ENCODE measurements at regions of chr11 and their contacts with region 1.

Region 1: DNA sequence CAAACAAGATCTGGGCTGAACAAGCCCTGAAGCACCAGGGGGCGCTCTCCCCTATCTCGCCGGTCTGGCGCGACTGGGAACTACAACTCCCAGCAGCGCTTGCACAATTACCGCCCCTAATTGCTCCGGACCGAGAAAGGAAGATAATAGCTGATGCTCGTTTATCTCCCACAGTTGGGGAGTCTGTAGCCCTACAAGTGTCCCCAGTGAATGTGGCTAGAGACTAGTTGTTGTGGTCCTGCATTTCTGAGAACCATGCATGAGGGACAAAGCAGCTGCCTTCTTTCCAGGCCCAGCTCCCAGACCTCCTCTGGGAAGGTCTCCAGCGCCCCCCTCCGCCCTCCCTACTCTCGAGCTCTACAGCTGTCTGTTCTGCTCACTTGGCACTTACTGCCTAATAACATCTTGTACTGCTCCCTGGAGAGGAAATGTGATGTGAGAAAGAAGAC is 34.4 kb downstream of the NRXN2 start:
- DNase-seq: peak; percentile 90
- H3K4me3 Mint-ChIP-seq: no peak overlapping the region
- H3K27ac Mint-ChIP-seq: no peak overlapping the region
- H3K4me1 Mint-ChIP-seq: peaks cover 25% of the 10 kb centered on the region
- H3K27me3 Mint-ChIP-seq: peaks cover 35% of the 10 kb centered on the region

Region 2: GRCh38 chr11:64703048-64703447 is 14.5 kb after region 1 on chr11:
- CTCF ChIA-PET with region 1: interaction called, 47 read pairs
- POLR2A ChIA-PET with region 1: interaction called, 10 read pairs
- DNase-seq: no peak
- H3K4me3 Mint-ChIP-seq: no peak overlapping the region
- H3K27ac Mint-ChIP-seq: no peak overlapping the region
- H3K4me1 Mint-ChIP-seq: no peaks in the 10 kb centered on the region
- H3K27me3 Mint-ChIP-seq: peaks cover 45% of the 10 kb centered on the region

Region 3: GRCh38 chr11:64713031-64713780 is 24.6 kb after region 1 on chr11:
- CTCF ChIA-PET with region 1: interaction called, 13 read pairs
- POLR2A ChIA-PET with region 1: no interaction called
- DNase-seq: no peak
- H3K4me3 Mint-ChIP-seq: no peak overlapping the region
- H3K27ac Mint-ChIP-seq: no peak overlapping the region
- H3K4me1 Mint-ChIP-seq: peaks cover 15% of the 10 kb centered on the region
- H3K27me3 Mint-ChIP-seq: peaks cover 74% of the 10 kb centered on the region